Activated T-helper 1 cell treated with anti-CD3 and anti-CD28 coated beads, Interleukin-12 subunit alpha, Interleukin-12 subunit beta, Interleukin-2, Interleukin-4 antibody, amounts not matched to agents 30 ng/mL and 10 ng/mL and 1 ng/mL, durations not matched to agents 14 hours and 24 hours and 36 hours (primary cell): ENCODE measurements at regions of chr13 and their contacts with region 1.

Region 1: GRCh38 chr13:27171827-27172494 is 350 bp upstream of the USP12 start:
- DNase-seq: peak; percentile 92
- H3K4me3 Mint-ChIP-seq: peak overlapping the region; percentile 81
- H3K27ac Mint-ChIP-seq: peak overlapping the region; percentile 87
- H3K4me1 Mint-ChIP-seq: peaks cover 53% of the 10 kb centered on the region
- H3K27me3 Mint-ChIP-seq: no peaks in the 10 kb centered on the region

Region 2: GRCh38 chr13:27022571-27023311 is 149.2 kb before region 1 on chr13:
- intact Hi-C with region 1: loop called (anchors 1 kb)
- DNase-seq: no peak
- H3K4me3 Mint-ChIP-seq: no peak overlapping the region
- H3K27ac Mint-ChIP-seq: peak overlapping the region; percentile 32
- H3K4me1 Mint-ChIP-seq: peaks cover 23% of the 10 kb centered on the region
- H3K27me3 Mint-ChIP-seq: peaks cover 7% of the 10 kb centered on the region

Region 3: GRCh38 chr13:27147530-27148170 is 24.3 kb before region 1 on chr13:
- intact Hi-C with region 1: loop called (anchors 1 kb)
- DNase-seq: no peak
- H3K4me3 Mint-ChIP-seq: peak overlapping the region; percentile 55
- H3K27ac Mint-ChIP-seq: peak overlapping the region; percentile 93
- H3K4me1 Mint-ChIP-seq: peaks cover 71% of the 10 kb centered on the region
- H3K27me3 Mint-ChIP-seq: no peaks in the 10 kb centered on the region

Region 4: DNA sequence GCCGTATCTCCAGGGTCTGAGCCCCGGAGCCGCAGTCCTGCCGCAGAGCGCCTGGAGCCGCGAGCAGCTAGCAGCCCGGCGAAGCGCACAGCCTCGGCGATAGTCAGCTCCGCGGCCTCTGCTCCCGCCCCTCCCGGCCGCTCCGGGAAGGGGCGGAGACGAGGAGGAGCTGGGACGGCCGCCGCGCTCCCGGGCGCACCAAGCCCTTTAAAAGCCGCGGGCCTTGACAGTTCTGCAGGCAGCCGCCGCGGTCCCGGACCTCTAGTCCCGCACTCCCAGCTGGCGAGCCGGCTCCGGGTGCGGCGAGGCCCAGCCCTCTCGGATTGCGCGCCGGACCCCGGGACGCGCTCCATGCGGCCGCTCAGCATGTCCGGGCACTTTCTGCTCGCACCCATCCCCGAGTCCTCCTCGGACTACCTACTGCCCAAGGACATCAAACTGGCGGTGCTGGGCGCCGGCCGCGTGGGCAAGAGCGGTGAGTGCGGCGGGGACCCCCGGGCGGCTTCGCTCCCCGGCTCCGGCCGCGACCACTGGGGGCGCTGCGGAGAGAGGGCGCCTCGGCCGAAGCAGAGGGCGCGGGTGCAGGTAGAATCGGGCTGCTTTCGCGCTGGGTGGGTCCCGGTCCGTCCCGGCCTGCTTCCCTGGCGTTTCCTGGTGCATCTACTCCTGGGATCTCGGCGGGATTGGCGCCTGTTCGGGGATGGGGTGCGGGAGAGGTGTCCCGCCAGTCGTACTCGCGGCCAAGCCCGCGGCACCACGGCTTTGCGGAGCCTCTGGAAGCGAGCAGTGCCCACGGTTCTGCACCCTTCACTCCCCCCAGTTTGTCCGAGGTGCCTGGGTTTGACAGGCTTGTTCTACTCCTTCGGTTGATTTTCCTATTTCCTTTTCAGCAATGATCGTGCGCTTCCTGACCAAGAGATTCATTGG is 98.9 kb after region 1 on chr13 and contains the start of gene RASL11A:
- intact Hi-C with region 1: loop called (anchors 5 kb)
- DNase-seq: peak; percentile 63
- H3K4me3 Mint-ChIP-seq: peak within 1 kb of the TSS; percentile 89
- H3K27ac Mint-ChIP-seq: peak within 1 kb of the TSS; percentile 24
- H3K4me1 Mint-ChIP-seq: peaks cover 11% of the 10 kb centered on the region
- H3K27me3 Mint-ChIP-seq: peaks cover 40% of the 10 kb centered on the region
- total RNA-seq, gene RASL11A: 1.9 and 3.2 TPM in 2 replicates

Region 5: GRCh38 chr13:27449936-27450828 is 278.2 kb after region 1 on chr13 and contains the start of gene MTIF3:
- intact Hi-C with region 1: loop called (anchors 5 kb)
- DNase-seq: peak; percentile 95
- H3K4me3 Mint-ChIP-seq: peak within 1 kb of the TSS; percentile 91
- H3K27ac Mint-ChIP-seq: peak within 1 kb of the TSS; percentile 93
- H3K4me1 Mint-ChIP-seq: peaks cover 58% of the 10 kb centered on the region
- H3K27me3 Mint-ChIP-seq: no peaks in the 10 kb centered on the region
- total RNA-seq, gene MTIF3: 30.4 and 36.0 TPM in 2 replicates